ENCODE measurements at regions of chr4 and their contacts with region 1.

Region 1: DNA sequence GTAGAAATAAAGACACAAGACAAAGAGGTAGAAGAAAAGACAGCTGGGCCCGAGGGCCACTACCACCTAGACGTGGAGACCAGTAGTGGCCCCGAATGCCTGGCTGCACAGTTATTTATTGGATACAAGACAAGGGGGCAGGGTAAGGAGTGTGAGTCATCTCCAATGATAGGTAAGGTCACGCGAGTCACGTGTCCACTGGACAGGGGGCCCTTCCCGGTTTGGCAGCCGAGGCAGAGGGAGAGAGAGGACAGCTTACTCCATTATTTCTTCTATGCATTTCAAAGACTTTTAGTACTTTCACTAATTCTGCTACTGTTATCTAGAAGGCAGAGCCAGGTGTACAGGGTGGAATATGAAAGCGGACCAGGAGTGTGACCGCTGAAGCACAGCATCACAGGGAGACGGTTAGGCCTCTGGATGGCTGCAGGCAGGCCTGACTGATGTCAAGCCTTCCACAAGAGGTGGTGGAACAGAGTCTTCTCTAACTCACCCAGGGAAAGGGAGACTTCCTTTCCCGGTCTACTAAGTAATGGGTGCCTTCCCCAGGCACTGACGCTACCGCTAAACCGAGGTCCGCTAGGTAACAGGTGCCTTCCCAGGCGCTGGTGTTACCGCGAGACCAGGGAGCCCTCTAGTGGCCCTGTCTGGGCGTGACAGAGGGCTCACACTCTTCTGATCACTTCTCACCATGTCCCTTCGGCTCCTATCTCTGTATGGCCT is 44.9 kb downstream of the ZBTB49 start:
- DNase-seq: no peak
- H3K4me3 ChIP-seq: no peak overlapping the region
- H3K27ac ChIP-seq: no peak overlapping the region
- H3K4me1 ChIP-seq: no peaks in the 10 kb centered on the region
- H3K27me3 ChIP-seq: no peaks in the 10 kb centered on the region
- CTCF ChIP-seq: peak; percentile 11 to 53 (median 40)

Region 2: GRCh38 chr4:3736806-3737205 is 598.2 kb before region 1 on chr4:
- intact Hi-C with region 1: no loop called
- DNase-seq: no peak
- H3K4me3 ChIP-seq: no peak overlapping the region
- H3K27ac ChIP-seq: no peak overlapping the region
- H3K4me1 ChIP-seq: no peaks in the 10 kb centered on the region
- H3K27me3 ChIP-seq: no peaks in the 10 kb centered on the region
- CTCF ChIP-seq: no peak

Region 3: GRCh38 chr4:4256799-4257198 is 78.2 kb before region 1 on chr4:
- intact Hi-C with region 1: loop called (anchors 10 kb)
- DNase-seq: peak in 1 of 2 donors; percentile 34
- H3K4me3 ChIP-seq: no peak overlapping the region
- H3K27ac ChIP-seq: no peak overlapping the region
- H3K4me1 ChIP-seq: no peaks in the 10 kb centered on the region
- H3K27me3 ChIP-seq: no peaks in the 10 kb centered on the region
- CTCF ChIP-seq: no peak

Region 4: GRCh38 chr4:4810092-4810774 is 475.3 kb after region 1 on chr4:
- intact Hi-C with region 1: no loop called
- DNase-seq: no peak
- H3K4me3 ChIP-seq: no peak overlapping the region
- H3K27ac ChIP-seq: no peak overlapping the region
- H3K4me1 ChIP-seq: no peaks in the 10 kb centered on the region
- H3K27me3 ChIP-seq: no peaks in the 10 kb centered on the region
- CTCF ChIP-seq: no peak